CD4-positive, alpha-beta memory T cell (primary cell): ENCODE measurements at regions of chr20 and their contacts with region 1.

Region 1: GRCh38 chr20:53623454-53624211 is 30.0 kb upstream of the ZNF217 start:
- DNase-seq: peak; percentile 29 to 47 (median 31)
- H3K4me3 ChIP-seq: peak overlapping the region; percentile 43 to 67
- H3K4me3 Mint-ChIP-seq: peak overlapping the region; percentile 82 to 90 (median 88)
- H3K27ac ChIP-seq: peak overlapping the region; percentile 58
- H3K27ac Mint-ChIP-seq: peak overlapping the region; percentile 88 to 97 (median 95)
- H3K4me1 ChIP-seq: peaks cover 37% of the 10 kb centered on the region
- H3K4me1 Mint-ChIP-seq: peaks cover 29 to 38% (median 35%) of the 10 kb centered on the region in 4 donors
- H3K27me3 ChIP-seq: no peaks in the 10 kb centered on the region
- H3K27me3 Mint-ChIP-seq: no peaks in the 10 kb centered on the region

Region 2: DNA sequence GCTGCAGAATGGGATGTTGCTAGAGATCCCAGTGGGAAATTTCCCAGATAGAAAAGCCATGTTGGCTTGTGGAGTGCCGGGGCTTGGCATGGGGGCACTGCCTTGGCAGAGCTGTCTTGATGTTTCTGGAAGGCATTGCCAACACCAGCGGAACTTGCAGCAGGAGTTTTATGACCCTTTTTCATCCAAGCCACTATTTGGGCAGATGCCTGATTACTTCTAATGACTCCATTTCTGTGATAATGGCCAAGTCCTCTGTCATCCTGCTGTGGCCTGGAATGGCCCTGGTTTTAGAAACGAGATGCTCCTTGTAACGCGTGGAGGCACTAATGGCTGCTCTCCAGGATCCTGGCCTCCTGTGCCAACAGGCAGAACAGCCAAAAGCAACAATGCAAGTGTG is 259.0 kb before region 1 on chr20:
- CTCF ChIA-PET with region 1: no interaction called
- POLR2A ChIA-PET with region 1: no interaction called
- intact Hi-C with region 1: no loop called
- DNase-seq: no peak
- H3K4me3 ChIP-seq: no peak overlapping the region
- H3K4me3 Mint-ChIP-seq: no peak overlapping the region
- H3K27ac ChIP-seq: no peak overlapping the region
- H3K27ac Mint-ChIP-seq: no peak overlapping the region
- H3K4me1 ChIP-seq: no peaks in the 10 kb centered on the region
- H3K4me1 Mint-ChIP-seq: peaks cover 0 to 2% (median 0%) of the 10 kb centered on the region in 4 donors
- H3K27me3 ChIP-seq: no peaks in the 10 kb centered on the region
- H3K27me3 Mint-ChIP-seq: peaks cover 0 to 3% of the 10 kb centered on the region in 2 donors

Region 3: GRCh38 chr20:53513301-53514298 is 110.0 kb before region 1 on chr20:
- CTCF ChIA-PET with region 1: no interaction called
- POLR2A ChIA-PET with region 1: no interaction called
- intact Hi-C with region 1: no loop called
- DNase-seq: no peak
- H3K4me3 ChIP-seq: no peak overlapping the region
- H3K4me3 Mint-ChIP-seq: no peak overlapping the region
- H3K27ac ChIP-seq: no peak overlapping the region
- H3K27ac Mint-ChIP-seq: no peak overlapping the region
- H3K4me1 ChIP-seq: no peaks in the 10 kb centered on the region
- H3K4me1 Mint-ChIP-seq: no peaks in the 10 kb centered on the region
- H3K27me3 ChIP-seq: no peaks in the 10 kb centered on the region
- H3K27me3 Mint-ChIP-seq: no peaks in the 10 kb centered on the region

Region 4: DNA sequence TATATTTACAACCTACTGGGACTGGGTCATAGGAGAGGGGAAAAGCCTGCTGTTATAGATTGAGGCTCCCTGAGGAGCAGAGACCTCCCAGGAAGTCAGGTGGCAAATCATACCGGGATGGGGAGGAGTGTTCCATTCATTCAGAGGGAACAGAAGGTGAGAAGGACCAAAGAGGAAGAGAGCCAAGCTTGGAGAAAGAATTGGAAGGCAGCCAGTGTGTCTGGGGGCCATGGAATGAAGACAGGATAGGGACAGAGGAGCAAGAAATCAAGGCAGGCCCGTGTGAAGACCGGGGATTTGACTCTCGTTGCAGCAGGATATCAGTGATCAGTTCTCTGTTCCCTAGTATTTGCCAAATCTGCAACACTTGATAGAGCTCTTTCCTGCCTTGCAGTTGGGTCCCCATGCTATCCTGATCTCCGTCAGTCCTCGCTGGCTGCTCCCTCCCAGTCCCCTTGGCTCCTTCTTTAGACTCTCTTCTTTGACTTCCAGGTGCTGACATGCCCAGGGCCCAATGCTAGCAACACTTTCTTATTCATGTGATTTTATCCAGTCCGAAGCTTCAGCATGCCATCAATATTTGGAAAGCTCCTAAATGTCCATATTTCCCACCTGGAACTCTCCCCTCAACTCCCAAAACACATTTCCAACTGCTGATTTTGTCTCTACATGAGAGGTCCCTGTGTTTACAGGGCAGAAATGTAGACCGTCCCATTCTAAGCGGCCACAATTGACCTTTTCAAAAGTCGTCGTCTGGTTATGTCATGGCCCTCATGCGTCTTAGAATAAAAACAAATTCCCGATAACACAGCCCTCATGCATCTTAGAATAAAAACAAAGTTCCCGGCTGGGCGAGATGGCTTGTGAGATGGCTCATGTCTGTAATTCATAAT is 24.0 kb before region 1 on chr20:
- CTCF ChIA-PET with region 1: interaction called, 12 read pairs
- POLR2A ChIA-PET with region 1: interaction called, 68 read pairs
- intact Hi-C with region 1: no loop called
- DNase-seq: no peak
- H3K4me3 ChIP-seq: no peak overlapping the region
- H3K4me3 Mint-ChIP-seq: peak overlapping the region in 4 of 8 donors; percentile 1 to 73 (median 71)
- H3K27ac ChIP-seq: peak overlapping the region; percentile 37
- H3K27ac Mint-ChIP-seq: peak overlapping the region; percentile 86 to 96 (median 92)
- H3K4me1 ChIP-seq: peaks cover 40% of the 10 kb centered on the region
- H3K4me1 Mint-ChIP-seq: peaks cover 41 to 78% (median 60%) of the 10 kb centered on the region in 4 donors
- H3K27me3 ChIP-seq: no peaks in the 10 kb centered on the region
- H3K27me3 Mint-ChIP-seq: no peaks in the 10 kb centered on the region

Region 5: GRCh38 chr20:53635221-53635924 is 11.7 kb after region 1 on chr20:
- CTCF ChIA-PET with region 1: interaction called, 14 read pairs
- POLR2A ChIA-PET with region 1: interaction called, 6 read pairs
- intact Hi-C with region 1: no loop called
- DNase-seq: no peak
- H3K4me3 ChIP-seq: no peak overlapping the region
- H3K4me3 Mint-ChIP-seq: no peak overlapping the region
- H3K27ac ChIP-seq: no peak overlapping the region
- H3K27ac Mint-ChIP-seq: peak overlapping the region in 4 of 7 donors; percentile 1 to 72 (median 42)
- H3K4me1 ChIP-seq: peaks cover 10% of the 10 kb centered on the region
- H3K4me1 Mint-ChIP-seq: peaks cover 12 to 27% (median 18%) of the 10 kb centered on the region in 4 donors
- H3K27me3 ChIP-seq: no peaks in the 10 kb centered on the region
- H3K27me3 Mint-ChIP-seq: no peaks in the 10 kb centered on the region

Region 6: GRCh38 chr20:53660078-53660909 is 36.7 kb after region 1 on chr20:
- CTCF ChIA-PET with region 1: interaction called, 11 read pairs
- POLR2A ChIA-PET with region 1: interaction called, 13 read pairs
- intact Hi-C with region 1: no loop called
- DNase-seq: peak in 2 of 5 donors; percentile 16 to 18
- H3K4me3 ChIP-seq: peak overlapping the region; percentile 56 to 66
- H3K4me3 Mint-ChIP-seq: peak overlapping the region; percentile 77 to 91 (median 88)
- H3K27ac ChIP-seq: peak overlapping the region; percentile 41
- H3K27ac Mint-ChIP-seq: peak overlapping the region; percentile 63 to 93 (median 89)
- H3K4me1 ChIP-seq: peaks cover 46% of the 10 kb centered on the region
- H3K4me1 Mint-ChIP-seq: peaks cover 36 to 70% (median 50%) of the 10 kb centered on the region in 4 donors
- H3K27me3 ChIP-seq: no peaks in the 10 kb centered on the region
- H3K27me3 Mint-ChIP-seq: no peaks in the 10 kb centered on the region